ENCODE measurements at regions of chr10 and their contacts with region 1.

Region 1: GRCh38 chr10:72175166-72175565 is 40.6 kb upstream of the ANAPC16 start:
- DNase-seq: no peak

Region 2: DNA sequence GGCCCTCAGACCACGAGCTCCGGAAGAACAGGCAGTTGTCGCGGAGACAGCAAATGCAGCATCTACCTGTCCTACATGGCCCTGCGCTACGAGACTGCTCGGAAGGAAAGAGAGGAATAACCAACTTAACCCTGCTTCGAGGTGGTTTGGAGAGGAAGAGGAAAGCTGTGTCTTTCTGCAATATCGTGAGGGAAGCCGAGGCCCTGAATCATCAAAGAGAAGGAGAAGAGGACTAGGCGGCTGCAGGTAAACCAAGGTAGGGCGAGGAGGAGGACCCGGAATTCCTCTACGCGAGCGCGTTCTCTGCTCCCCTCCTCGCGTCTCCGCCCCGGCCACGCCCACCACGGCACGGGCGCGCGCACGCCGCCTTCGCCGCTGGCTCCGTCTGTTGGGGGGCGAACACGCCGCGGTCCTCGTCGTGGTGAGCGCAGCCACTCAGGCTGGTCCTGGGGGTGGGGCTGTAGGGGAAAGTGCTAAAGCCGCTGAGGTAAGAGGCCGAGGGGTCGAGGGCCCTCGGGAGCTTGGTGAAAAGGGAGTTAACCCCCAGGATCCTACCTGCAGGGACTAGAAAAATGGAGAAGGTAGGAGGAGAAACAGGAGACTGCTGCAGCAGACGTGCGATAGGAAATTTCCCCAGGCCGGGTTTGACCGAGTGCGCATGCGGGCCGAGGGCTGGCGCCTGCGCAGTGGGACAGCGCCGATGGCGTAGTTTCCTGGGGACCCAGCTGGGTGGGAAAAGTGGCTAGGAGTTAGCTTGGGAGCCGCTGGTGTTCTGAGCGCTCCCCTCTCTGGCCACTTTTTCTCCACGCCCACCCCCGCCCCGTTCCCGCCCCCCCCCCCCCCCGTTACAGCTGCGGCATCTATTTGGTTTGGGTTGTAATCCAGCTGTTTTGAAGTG is 40.7 kb after region 1 on chr10 and contains the starts of genes ANAPC16 and ASCC1:
- intact Hi-C with region 1: loop called (anchors 5 kb)
- DNase-seq: peak; percentile 95
- total RNA-seq, gene ANAPC16: 171 TPM
- total RNA-seq, gene ASCC1: 21.2 TPM

Region 3: DNA sequence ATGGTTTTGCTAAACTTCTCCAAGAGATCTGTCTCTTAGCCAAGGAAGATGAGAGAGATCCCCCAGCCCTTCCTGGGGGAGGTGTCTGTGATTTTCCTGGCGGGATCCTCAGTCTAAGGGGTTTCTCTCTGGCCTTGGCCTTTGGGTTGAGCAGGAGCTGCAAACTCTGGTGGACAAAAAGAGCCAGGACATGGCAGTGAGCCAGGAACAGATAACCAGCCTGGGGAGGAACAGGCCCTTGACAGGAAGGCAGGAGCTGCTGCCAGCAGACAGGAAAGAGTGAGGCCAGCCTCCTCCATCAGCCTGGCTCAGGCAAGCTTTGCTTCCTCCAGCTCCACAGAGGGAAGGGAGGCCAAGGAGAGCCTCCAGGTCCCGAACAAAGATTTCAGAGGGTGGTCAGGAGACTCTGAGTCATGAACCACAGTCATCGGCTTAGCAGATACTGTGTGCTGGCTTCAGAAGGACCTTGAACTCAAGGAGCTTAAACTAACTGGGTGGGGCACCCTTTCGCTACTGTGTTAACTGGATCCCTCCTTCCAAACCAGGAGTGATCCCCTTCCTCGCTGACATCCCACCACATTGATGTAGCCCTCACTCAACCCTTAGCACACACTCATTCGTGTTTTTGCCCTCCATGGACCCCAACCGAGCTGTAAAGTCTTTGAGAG is 133.3 kb after region 1 on chr10:
- intact Hi-C with region 1: no loop called
- DNase-seq: no peak

Measured in cardiac septum (tissue), 1 donor.